B cell (primary cell): ENCODE measurements at regions of chr12 and their contacts with region 1.

Region 1: GRCh38 chr12:67991158-67991557 is 1.9 kb downstream of the IFNG-AS1 start:
- DNase-seq: peak; percentile 79
- ATAC-seq: peak; percentile 82
- H3K4me3 ChIP-seq: peak overlapping the region in 4 of 5 experiments; percentile 7 to 71 (median 38)
- H3K4me3 Mint-ChIP-seq: peak overlapping the region; percentile 74
- H3K27ac ChIP-seq: peak overlapping the region; percentile 95 to 98
- H3K27ac Mint-ChIP-seq: peak overlapping the region; percentile 91
- H3K4me1 ChIP-seq: peaks cover 54 to 71% of the 10 kb centered on the region in 2 donors
- H3K4me1 Mint-ChIP-seq: peaks cover 67% of the 10 kb centered on the region
- H3K27me3 ChIP-seq: no peaks in the 10 kb centered on the region
- H3K27me3 Mint-ChIP-seq: no peaks in the 10 kb centered on the region
- CTCF ChIP-seq: no peak

Region 2: DNA sequence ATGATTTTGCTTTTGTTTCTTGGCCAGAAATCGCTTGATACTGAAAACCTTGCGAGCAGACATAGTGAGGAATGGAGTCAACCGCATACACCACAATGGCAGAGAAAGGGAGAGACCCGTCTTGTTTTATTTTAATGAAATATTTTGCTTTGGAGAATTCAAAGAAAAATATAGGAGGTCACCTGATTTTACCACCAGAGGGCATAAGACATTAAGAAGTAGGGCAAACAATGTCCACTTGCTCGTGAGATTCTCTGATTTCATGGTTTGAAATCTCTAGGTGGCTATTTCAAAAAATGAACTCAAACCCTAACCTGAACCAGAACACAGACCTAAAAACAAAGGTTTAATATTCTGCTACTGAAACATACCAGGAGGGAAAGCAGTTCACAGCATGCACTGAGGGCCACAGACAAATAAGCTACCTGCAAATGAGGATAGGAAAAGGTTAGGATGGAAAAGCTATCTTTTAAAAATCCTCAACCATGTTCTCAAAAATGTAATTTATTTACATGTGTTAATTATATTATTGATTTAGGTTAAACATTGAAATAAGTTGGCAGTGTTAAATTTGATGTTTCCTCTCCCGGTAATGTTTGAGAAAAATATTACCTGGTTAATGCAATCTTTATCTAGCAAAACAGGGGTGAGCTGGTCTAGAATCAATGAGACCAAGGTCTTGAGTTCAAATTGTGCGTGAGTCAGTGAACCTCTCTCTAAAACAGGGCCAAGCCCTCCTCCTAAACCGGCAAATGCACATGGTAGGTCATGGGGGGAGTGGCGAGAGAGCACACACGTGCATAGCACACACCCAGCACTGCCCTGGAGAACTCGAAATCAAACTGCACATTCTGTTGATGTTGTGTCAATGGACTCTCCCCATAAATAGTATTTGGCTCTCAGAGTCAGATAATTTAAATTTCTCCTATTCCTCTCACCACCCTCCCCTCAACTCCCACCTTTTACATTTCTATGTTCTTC is 10.6 kb after region 1 on chr12:
- CTCF ChIA-PET with region 1: interaction called, 24 read pairs
- POLR2A ChIA-PET with region 1: no interaction called
- intact Hi-C with region 1: no loop called
- DNase-seq: peak; percentile 33
- ATAC-seq: no peak
- H3K4me3 ChIP-seq: no peak overlapping the region
- H3K4me3 Mint-ChIP-seq: no peak overlapping the region
- H3K27ac ChIP-seq: peak overlapping the region in 1 of 2 donors; percentile 23
- H3K27ac Mint-ChIP-seq: no peak overlapping the region
- H3K4me1 ChIP-seq: peaks cover 6% of the 10 kb centered on the region in 2 donors
- H3K4me1 Mint-ChIP-seq: peaks cover 7% of the 10 kb centered on the region
- H3K27me3 ChIP-seq: no peaks in the 10 kb centered on the region
- H3K27me3 Mint-ChIP-seq: no peaks in the 10 kb centered on the region
- CTCF ChIP-seq: peak; percentile 63

Region 3: GRCh38 chr12:68012712-68013111 is 21.6 kb after region 1 on chr12:
- CTCF ChIA-PET with region 1: interaction called, 5 read pairs
- POLR2A ChIA-PET with region 1: interaction called, 6 read pairs
- intact Hi-C with region 1: loop called (anchors 1 kb)
- DNase-seq: peak; percentile 74
- ATAC-seq: peak; percentile 91
- H3K4me3 ChIP-seq: peak overlapping the region in 1 of 5 experiments; percentile 6
- H3K4me3 Mint-ChIP-seq: peak overlapping the region; percentile 54
- H3K27ac ChIP-seq: no peak overlapping the region
- H3K27ac Mint-ChIP-seq: peak overlapping the region; percentile 54
- H3K4me1 ChIP-seq: peaks cover 28% of the 10 kb centered on the region in 2 donors
- H3K4me1 Mint-ChIP-seq: peaks cover 45% of the 10 kb centered on the region
- H3K27me3 ChIP-seq: no peaks in the 10 kb centered on the region
- H3K27me3 Mint-ChIP-seq: no peaks in the 10 kb centered on the region
- CTCF ChIP-seq: no peak